Activated CD4-positive, alpha-beta memory T cell treated with anti-CD3 and anti-CD28 coated beads for 36 hours (primary cell): ENCODE measurements at regions of chr4 and their contacts with region 1.

Region 1: GRCh38 chr4:151753041-151753440 is 7.8 kb downstream of the GATB start:
- DNase-seq: peak; percentile 52
- H3K4me3 Mint-ChIP-seq: no peak overlapping the region
- H3K27ac Mint-ChIP-seq: no peak overlapping the region
- H3K4me1 Mint-ChIP-seq: peaks cover 12% of the 10 kb centered on the region
- H3K27me3 Mint-ChIP-seq: no peaks in the 10 kb centered on the region

Region 2: GRCh38 chr4:151729731-151730559 is 23.1 kb before region 1 on chr4:
- CTCF ChIA-PET with region 1: no interaction called
- POLR2A ChIA-PET with region 1: no interaction called
- intact Hi-C with region 1: loop called (anchors 2 kb)
- DNase-seq: no peak
- H3K4me3 Mint-ChIP-seq: no peak overlapping the region
- H3K27ac Mint-ChIP-seq: no peak overlapping the region
- H3K4me1 Mint-ChIP-seq: peaks cover 10% of the 10 kb centered on the region
- H3K27me3 Mint-ChIP-seq: no peaks in the 10 kb centered on the region